MCF 10A (cell line): ENCODE measurements at regions of chr10 and their contacts with region 1.

Region 1: GRCh38 chr10:104406715-104407650 is 53.4 kb downstream of the CFAP58 start:
- DNase-seq: peak; percentile 55
- H3K4me3 Mint-ChIP-seq: no peak overlapping the region
- H3K27ac Mint-ChIP-seq: no peak overlapping the region
- H3K4me1 Mint-ChIP-seq: no peaks in the 10 kb centered on the region
- H3K27me3 Mint-ChIP-seq: no peaks in the 10 kb centered on the region
- CTCF ChIP-seq: peak; percentile 64

Region 2: DNA sequence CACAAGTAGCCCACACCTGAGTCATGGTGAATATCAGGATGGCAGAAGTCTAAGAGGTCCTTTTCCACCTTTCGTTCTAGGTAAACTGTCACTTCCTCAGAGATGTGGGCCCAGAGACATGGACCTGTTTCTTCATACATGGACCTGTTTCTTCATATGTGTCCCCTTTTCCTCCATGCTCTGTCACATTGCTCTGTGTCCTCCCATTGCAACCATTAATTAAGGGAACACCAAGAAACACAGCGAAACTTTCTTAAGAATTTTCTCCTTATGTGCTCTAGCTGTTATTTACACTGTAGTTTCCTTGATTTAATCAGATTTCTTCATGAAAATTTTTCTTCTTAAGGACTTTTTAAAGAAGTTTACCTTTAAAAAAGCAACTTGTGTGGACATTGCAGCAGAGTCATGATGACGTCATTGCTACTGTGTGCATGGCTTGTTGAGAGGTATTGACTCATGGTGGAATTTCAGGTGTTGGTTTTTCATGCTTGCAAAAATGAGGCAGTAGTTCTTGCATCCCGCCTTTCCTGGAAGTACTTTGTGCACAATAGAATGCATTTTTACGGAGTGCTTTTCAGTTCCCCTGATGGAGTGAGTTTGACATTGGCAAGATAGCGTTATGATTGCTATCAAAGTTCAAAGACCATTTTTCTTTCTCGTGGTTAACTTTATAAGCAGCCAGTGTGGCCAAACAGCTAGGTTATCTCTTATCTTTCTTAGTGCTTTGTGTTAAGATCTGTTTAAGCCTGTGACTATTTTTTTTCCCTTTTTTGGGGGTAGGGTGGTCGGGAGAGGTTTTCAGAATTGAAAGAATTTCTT is 15.6 kb before region 1 on chr10:
- CTCF ChIA-PET with region 1: interaction called, 30 read pairs
- POLR2A ChIA-PET with region 1: no interaction called
- intact Hi-C with region 1: no loop called
- DNase-seq: peak; percentile 69
- H3K4me3 Mint-ChIP-seq: no peak overlapping the region
- H3K27ac Mint-ChIP-seq: no peak overlapping the region
- H3K4me1 Mint-ChIP-seq: peaks cover 9% of the 10 kb centered on the region
- H3K27me3 Mint-ChIP-seq: no peaks in the 10 kb centered on the region
- CTCF ChIP-seq: no peak

Region 3: DNA sequence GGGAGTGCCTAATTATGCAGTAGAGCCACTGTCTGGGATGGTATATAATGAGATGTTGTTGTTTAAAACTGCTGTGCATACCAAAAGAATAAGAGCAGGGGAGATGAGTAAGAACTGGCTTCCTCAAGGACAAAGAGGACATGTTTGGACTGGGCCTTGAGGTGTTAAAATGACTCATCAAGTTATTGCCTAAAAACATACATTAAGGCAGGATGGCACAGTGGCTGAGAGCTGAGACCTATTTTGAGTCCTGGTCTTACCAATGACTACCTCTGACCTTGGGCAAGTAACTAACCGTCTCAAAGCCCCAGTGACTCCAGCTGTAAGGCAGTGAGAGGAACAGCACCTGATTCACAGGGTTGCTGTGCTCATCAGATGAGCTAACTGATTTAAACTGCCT is 17.7 kb after region 1 on chr10:
- CTCF ChIA-PET with region 1: interaction called, 12 read pairs
- POLR2A ChIA-PET with region 1: no interaction called
- intact Hi-C with region 1: no loop called
- DNase-seq: peak; percentile 76
- H3K4me3 Mint-ChIP-seq: no peak overlapping the region
- H3K27ac Mint-ChIP-seq: peak overlapping the region; percentile 28
- H3K4me1 Mint-ChIP-seq: peaks cover 11% of the 10 kb centered on the region
- H3K27me3 Mint-ChIP-seq: no peaks in the 10 kb centered on the region
- CTCF ChIP-seq: no peak

Region 4: GRCh38 chr10:104580774-104581675 is 174.0 kb after region 1 on chr10:
- CTCF ChIA-PET with region 1: interaction called, 65 read pairs
- POLR2A ChIA-PET with region 1: no interaction called
- intact Hi-C with region 1: loop called (anchors 1 kb)
- DNase-seq: peak; percentile 84
- H3K4me3 Mint-ChIP-seq: peak overlapping the region; percentile 37
- H3K27ac Mint-ChIP-seq: peak overlapping the region; percentile 65
- H3K4me1 Mint-ChIP-seq: peaks cover 28% of the 10 kb centered on the region
- H3K27me3 Mint-ChIP-seq: no peaks in the 10 kb centered on the region
- CTCF ChIP-seq: peak; percentile 67

Region 5: DNA sequence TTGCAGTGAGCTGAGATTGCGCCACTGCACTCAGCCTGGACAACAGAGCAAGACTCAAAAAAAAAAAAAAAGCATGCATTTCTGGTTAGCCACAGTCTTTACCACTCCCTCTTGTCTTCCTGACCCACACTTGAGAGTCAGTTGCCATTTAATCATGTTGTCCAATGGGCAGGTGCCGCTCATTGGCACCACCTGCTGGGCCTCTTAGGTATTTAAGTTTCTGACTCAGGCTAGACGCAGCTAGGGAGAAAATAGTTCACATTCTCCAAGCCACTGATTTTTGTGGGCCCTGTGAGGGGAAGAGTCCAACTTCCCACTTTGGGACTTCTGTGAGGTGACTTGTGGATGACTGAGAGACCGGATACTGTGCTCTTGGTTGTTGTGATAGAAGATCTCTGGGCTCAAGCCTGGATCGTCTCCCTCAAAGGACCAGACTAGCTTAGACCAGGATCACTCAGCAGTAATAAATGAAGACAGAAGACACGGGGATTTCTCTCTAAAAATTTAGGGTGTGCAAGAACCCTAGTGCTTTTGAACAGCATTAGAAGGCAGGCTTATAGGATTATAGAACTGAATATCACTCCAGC is 207.4 kb after region 1 on chr10:
- CTCF ChIA-PET with region 1: interaction called, 155 read pairs
- POLR2A ChIA-PET with region 1: no interaction called
- intact Hi-C with region 1: loop called (anchors 2 kb)
- DNase-seq: peak; percentile 59
- H3K4me3 Mint-ChIP-seq: no peak overlapping the region
- H3K27ac Mint-ChIP-seq: no peak overlapping the region
- H3K4me1 Mint-ChIP-seq: no peaks in the 10 kb centered on the region
- H3K27me3 Mint-ChIP-seq: no peaks in the 10 kb centered on the region
- CTCF ChIP-seq: peak; percentile 85

Region 6: GRCh38 chr10:104925232-104925851 is 518.4 kb after region 1 on chr10:
- CTCF ChIA-PET with region 1: interaction called, 13 read pairs
- POLR2A ChIA-PET with region 1: no interaction called
- intact Hi-C with region 1: loop called (anchors 10 kb)
- DNase-seq: peak; percentile 72
- H3K4me3 Mint-ChIP-seq: no peak overlapping the region
- H3K27ac Mint-ChIP-seq: no peak overlapping the region
- H3K4me1 Mint-ChIP-seq: no peaks in the 10 kb centered on the region
- H3K27me3 Mint-ChIP-seq: no peaks in the 10 kb centered on the region
- CTCF ChIP-seq: peak; percentile 70